ENCODE measurements at regions of chr1 and their contacts with region 1.

Region 1: DNA sequence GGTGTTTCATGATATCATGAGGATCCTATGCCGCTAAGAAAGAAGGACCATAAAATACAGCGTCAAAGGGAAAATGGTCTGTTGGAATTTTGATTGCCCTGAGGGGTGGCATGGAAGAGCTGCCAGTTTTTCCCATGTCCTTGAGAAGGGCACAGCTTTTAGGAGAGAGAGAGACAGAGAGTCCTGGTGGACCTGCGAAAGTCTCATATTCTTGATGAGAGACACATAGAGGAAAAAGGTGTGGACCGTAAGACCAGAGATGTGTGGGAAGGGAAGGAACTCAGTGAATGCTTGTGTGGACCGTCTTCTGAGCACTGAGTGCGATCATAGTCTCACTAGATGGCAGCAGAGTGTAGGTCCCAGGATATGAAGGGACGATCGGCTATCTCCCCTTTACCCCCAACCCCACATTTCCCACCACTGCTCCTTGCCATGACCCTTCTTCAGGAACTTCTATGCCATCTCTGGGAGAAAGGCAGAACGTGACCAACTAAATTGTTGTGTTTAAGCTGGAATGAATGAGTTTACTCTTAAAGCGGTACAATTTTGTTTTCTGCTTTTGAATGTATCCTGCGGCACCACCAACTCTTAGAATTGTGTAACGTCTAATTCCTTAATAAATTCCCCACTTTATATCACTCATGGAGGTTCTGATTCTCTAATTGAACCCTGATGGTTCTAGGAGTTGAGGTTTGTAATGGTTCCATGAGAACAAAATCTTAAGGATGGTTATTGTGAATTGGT is 117.7 kb downstream of the CTH start:
- DNase-seq: peak; percentile 33 to 76 (median 48)
- ATAC-seq: peak; percentile 98
- H3K4me3 ChIP-seq: no peak overlapping the region
- H3K27ac ChIP-seq: no peak overlapping the region
- H3K4me1 ChIP-seq: no peaks in the 10 kb centered on the region; a peak in 1 of 5 replicates
- H3K27me3 ChIP-seq: no peaks in the 10 kb centered on the region
- CTCF ChIP-seq: peak; percentile 76 to 79 (median 78)
- EP300 ChIP-seq: no peak
- POLR2A ChIP-seq: no peak
- RAD21 ChIP-seq: peak; percentile 85 to 93

Region 2: GRCh38 chr1:70617728-70618127 is 89.0 kb after region 1 on chr1:
- CTCF ChIA-PET with region 1: no interaction called
- POLR2A ChIA-PET with region 1: no interaction called
- in situ Hi-C with region 1: no loop called
- intact Hi-C with region 1: loop called (anchors 5 kb)
- DNase-seq: no peak
- ATAC-seq: no peak
- H3K4me3 ChIP-seq: no peak overlapping the region
- H3K27ac ChIP-seq: no peak overlapping the region
- H3K4me1 ChIP-seq: no peaks in the 10 kb centered on the region
- H3K27me3 ChIP-seq: no peaks in the 10 kb centered on the region
- CTCF ChIP-seq: 0 out of 6 replicates have a peak, but pooled peaks of 2 of the 3 experiments have one; percentile 6 to 10
- EP300 ChIP-seq: no peak
- POLR2A ChIP-seq: no peak
- RAD21 ChIP-seq: peak in 1 of 2 experiments; percentile 18; a peak in 1 of 4 replicates

Region 3: GRCh38 chr1:70685300-70686241 is 156.8 kb after region 1 on chr1:
- CTCF ChIA-PET with region 1: no interaction called
- POLR2A ChIA-PET with region 1: no interaction called
- in situ Hi-C with region 1: no loop called
- intact Hi-C with region 1: loop called (anchors 5 kb)
- DNase-seq: peak; percentile 60 to 83 (median 68)
- ATAC-seq: peak; percentile 96
- H3K4me3 ChIP-seq: no peak overlapping the region
- H3K27ac ChIP-seq: no peak overlapping the region
- H3K4me1 ChIP-seq: peaks cover 3 to 5% of the 10 kb centered on the region in 2 experiments; a peak in 2 of 5 replicates
- H3K27me3 ChIP-seq: no peaks in the 10 kb centered on the region
- CTCF ChIP-seq: peak; percentile 84 to 90 (median 88)
- EP300 ChIP-seq: no peak
- POLR2A ChIP-seq: no peak
- RAD21 ChIP-seq: peak; percentile 81 to 92

Region 4: DNA sequence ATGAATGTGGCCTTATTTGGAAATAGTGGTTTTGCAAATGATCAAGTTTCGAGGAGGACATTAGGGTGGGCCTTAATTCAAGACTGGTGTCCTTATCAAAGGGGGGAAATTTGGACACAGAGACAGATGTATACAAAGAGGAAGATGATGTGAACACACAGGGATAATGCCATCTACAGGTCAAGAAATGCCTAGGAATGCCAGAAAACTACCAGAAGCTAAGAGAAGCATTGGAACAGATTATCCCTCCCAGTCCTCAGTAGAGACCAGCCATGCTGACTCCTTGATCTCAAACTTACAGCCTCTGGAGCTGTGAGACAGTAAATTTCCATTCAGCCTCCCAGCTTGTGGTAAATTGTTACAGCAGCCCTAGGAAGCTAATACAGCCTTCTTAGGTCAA is 367.5 kb after region 1 on chr1:
- CTCF ChIA-PET with region 1: no interaction called
- POLR2A ChIA-PET with region 1: no interaction called
- in situ Hi-C with region 1: no loop called
- intact Hi-C with region 1: loop called (anchors 1 kb)
- DNase-seq: no peak
- ATAC-seq: peak; percentile 80
- H3K4me3 ChIP-seq: no peak overlapping the region
- H3K27ac ChIP-seq: no peak overlapping the region
- H3K4me1 ChIP-seq: peaks cover 0 to 24% of the 10 kb centered on the region in 2 experiments; a peak in 3 of 5 replicates
- H3K27me3 ChIP-seq: no peaks in the 10 kb centered on the region
- CTCF ChIP-seq: peak; percentile 30 to 52 (median 36); a peak in 4 of 6 replicates
- EP300 ChIP-seq: no peak
- POLR2A ChIP-seq: no peak
- RAD21 ChIP-seq: peak; percentile 30 to 68; a peak in 3 of 4 replicates

Measured in K562 (cell line).